Adrenal gland (tissue), 19 donors: ENCODE measurements at regions of chr16 and their contacts with region 1.

Region 1: GRCh38 chr16:76656994-76657393 is 379.8 kb downstream of the CNTNAP4 start:
- DNase-seq: peak in 1 of 7 donors; percentile 62
- H3K4me3 ChIP-seq: no peak overlapping the region
- H3K27ac ChIP-seq: no peak overlapping the region
- H3K4me1 ChIP-seq: no peaks in the 10 kb centered on the region
- H3K27me3 ChIP-seq: no peaks in the 10 kb centered on the region
- CTCF ChIP-seq: no peak
- POLR2A ChIP-seq: no peak

Region 2: GRCh38 chr16:75789237-75789636 is 867.8 kb before region 1 on chr16:
- intact Hi-C with region 1: loop called in 1 of 2 experiments (anchors 5 kb)
- DNase-seq: peak in 1 of 7 donors; percentile 6
- H3K4me3 ChIP-seq: no peak overlapping the region
- H3K27ac ChIP-seq: no peak overlapping the region
- H3K4me1 ChIP-seq: no peaks in the 10 kb centered on the region
- H3K27me3 ChIP-seq: peaks cover 5% of the 10 kb centered on the region
- CTCF ChIP-seq: peak; percentile 67 to 94 (median 82)
- POLR2A ChIP-seq: no peak

Region 3: GRCh38 chr16:76385601-76386230 is 271.3 kb before region 1 on chr16:
- intact Hi-C with region 1: no loop called
- DNase-seq: no peak
- H3K4me3 ChIP-seq: no peak overlapping the region
- H3K27ac ChIP-seq: no peak overlapping the region
- H3K4me1 ChIP-seq: no peaks in the 10 kb centered on the region
- H3K27me3 ChIP-seq: no peaks in the 10 kb centered on the region
- CTCF ChIP-seq: no peak
- POLR2A ChIP-seq: no peak